ENCODE measurements at regions of chr9 and their contacts with region 1.

Region 1: GRCh38 chr9:70111042-70111602 is 67.5 kb downstream of the MAMDC2 start:
- DNase-seq: peak; percentile 66
- H3K4me3 Mint-ChIP-seq: no peak overlapping the region
- H3K27ac Mint-ChIP-seq: no peak overlapping the region
- H3K4me1 Mint-ChIP-seq: no peaks in the 10 kb centered on the region
- H3K27me3 Mint-ChIP-seq: peaks cover 29% of the 10 kb centered on the region

Region 2: DNA sequence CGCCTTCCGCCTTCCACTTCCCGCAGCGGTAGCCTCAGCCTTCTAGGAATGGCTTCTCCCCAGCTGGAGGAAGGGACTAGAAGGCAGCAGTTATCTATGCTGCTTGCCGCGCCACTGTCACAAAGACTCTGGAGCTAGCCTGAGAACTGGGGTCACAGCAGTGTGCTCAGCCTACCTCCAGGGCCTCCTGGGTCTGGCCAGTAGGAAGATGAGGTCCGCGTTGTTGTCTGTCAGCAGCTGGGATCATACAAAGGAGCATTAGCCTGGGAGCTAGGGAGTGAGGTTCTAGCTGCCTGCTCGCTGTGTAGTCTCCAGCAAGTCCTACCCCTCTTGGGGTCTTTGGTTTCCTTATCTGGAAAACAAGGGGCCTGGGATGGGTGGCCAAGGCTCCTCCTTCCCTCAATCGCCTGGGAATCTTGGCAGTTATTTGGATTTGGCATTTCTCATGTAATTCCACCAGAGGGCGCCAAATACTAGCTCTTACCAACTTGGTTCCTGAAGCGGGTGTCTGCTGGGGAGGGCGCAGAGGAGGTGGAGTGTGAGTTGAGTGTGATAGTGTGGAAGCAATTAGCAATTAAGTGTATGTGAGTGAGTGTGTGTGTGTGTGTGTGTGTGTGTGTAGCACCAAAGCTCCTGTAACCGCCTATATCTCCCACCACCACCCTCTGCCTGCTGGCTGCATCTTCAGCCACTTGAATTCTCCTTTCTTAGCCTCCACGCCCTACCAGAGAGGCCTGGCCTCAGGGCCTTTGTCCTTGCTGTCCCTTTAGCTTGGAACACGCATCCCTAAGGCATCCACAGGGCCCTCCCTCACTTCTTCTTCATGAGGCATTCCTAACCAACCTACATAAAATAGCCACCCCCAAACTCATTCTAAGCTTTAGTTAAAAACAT is 689.0 kb before region 1 on chr9:
- CTCF ChIA-PET with region 1: interaction called, 24 read pairs
- DNase-seq: peak; percentile 56
- H3K4me3 Mint-ChIP-seq: no peak overlapping the region
- H3K27ac Mint-ChIP-seq: no peak overlapping the region
- H3K4me1 Mint-ChIP-seq: no peaks in the 10 kb centered on the region
- H3K27me3 Mint-ChIP-seq: peaks cover 15% of the 10 kb centered on the region

Region 3: GRCh38 chr9:69971643-69972449 is 139.3 kb before region 1 on chr9:
- CTCF ChIA-PET with region 1: interaction called, 71 read pairs
- DNase-seq: peak; percentile 70
- H3K4me3 Mint-ChIP-seq: no peak overlapping the region
- H3K27ac Mint-ChIP-seq: no peak overlapping the region
- H3K4me1 Mint-ChIP-seq: no peaks in the 10 kb centered on the region
- H3K27me3 Mint-ChIP-seq: peaks cover 15% of the 10 kb centered on the region

Region 4: DNA sequence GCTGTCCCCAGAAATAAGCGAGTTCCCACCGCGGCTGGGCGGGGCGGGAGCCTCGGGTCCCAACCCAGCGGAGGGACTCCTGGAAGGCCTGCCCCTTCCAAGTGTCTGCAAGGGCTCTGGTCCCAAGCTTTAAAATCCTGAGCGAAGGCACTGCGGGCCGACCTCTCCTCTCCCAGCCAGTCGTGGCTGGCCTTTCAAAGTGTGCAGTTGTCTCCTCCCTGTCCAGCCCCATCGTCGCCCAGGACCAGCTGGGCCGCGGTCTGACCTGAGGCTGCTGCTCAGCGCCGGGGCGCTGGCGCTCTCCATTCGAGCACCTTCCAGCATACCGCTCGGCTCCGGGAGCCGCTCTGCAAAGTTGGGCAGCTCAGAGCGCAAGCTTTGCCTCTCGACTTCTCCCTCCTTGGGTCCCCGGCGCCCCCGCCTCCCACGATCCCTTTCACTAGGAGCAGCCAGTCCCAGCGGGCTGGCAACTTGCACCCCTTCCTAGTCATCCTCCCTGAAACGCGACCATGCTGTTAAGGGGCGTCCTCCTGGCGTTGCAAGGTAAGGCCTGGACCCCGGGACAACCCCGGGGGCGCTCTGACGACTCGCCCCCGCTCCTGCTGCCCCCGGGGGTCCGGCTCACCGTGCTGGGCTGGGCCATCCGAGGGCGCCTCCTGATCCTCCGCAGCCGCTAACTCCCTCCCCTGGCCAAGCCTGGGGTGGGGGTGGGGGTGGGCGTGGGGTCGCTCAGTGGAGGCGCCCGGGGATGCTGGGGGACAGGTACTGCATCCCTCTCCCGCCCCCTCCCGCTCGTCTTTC is 67.2 kb before region 1 on chr9 and contains the start of gene MAMDC2:
- CTCF ChIA-PET with region 1: no interaction called
- DNase-seq: no peak
- H3K4me3 Mint-ChIP-seq: no peak within 1 kb of the TSS
- H3K27ac Mint-ChIP-seq: no peak within 1 kb of the TSS
- H3K4me1 Mint-ChIP-seq: peaks cover 11% of the 10 kb centered on the region
- H3K27me3 Mint-ChIP-seq: peaks cover 71% of the 10 kb centered on the region

Region 5: GRCh38 chr9:70093944-70094343 is 17.2 kb before region 1 on chr9:
- CTCF ChIA-PET with region 1: interaction called, 33 read pairs
- DNase-seq: no peak
- H3K4me3 Mint-ChIP-seq: no peak overlapping the region
- H3K27ac Mint-ChIP-seq: no peak overlapping the region
- H3K4me1 Mint-ChIP-seq: no peaks in the 10 kb centered on the region
- H3K27me3 Mint-ChIP-seq: no peaks in the 10 kb centered on the region

Region 6: DNA sequence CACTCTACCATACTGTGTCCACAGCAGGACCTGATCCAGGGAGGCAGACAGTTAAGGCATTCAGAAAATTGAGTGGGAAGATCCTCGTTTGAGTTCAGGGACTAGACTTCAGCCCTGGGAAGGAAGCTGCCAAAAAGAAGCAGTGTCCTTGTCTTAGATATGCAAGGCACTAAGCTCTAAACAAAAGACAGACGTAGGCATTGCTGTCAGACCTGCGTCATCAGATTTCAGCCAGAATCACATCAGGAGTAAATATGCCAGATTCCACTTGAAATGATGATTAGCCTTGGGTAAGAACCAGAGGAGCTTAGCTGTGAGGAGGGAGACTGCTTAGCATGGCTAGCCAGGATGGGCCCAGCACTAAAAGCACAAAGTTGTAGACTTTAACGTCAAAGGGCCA is 10.8 kb before region 1 on chr9:
- CTCF ChIA-PET with region 1: interaction called, 33 read pairs
- DNase-seq: no peak
- H3K4me3 Mint-ChIP-seq: no peak overlapping the region
- H3K27ac Mint-ChIP-seq: no peak overlapping the region
- H3K4me1 Mint-ChIP-seq: no peaks in the 10 kb centered on the region
- H3K27me3 Mint-ChIP-seq: no peaks in the 10 kb centered on the region

Region 7: GRCh38 chr9:70133253-70134208 is 22.4 kb after region 1 on chr9:
- CTCF ChIA-PET with region 1: interaction called, 12 read pairs
- DNase-seq: no peak
- H3K4me3 Mint-ChIP-seq: no peak overlapping the region
- H3K27ac Mint-ChIP-seq: no peak overlapping the region
- H3K4me1 Mint-ChIP-seq: no peaks in the 10 kb centered on the region
- H3K27me3 Mint-ChIP-seq: peaks cover 4% of the 10 kb centered on the region

Region 8: GRCh38 chr9:70340572-70340971 is 229.4 kb after region 1 on chr9:
- CTCF ChIA-PET with region 1: no interaction called
- DNase-seq: no peak
- H3K4me3 Mint-ChIP-seq: no peak overlapping the region
- H3K27ac Mint-ChIP-seq: no peak overlapping the region
- H3K4me1 Mint-ChIP-seq: no peaks in the 10 kb centered on the region
- H3K27me3 Mint-ChIP-seq: no peaks in the 10 kb centered on the region

Region 9: DNA sequence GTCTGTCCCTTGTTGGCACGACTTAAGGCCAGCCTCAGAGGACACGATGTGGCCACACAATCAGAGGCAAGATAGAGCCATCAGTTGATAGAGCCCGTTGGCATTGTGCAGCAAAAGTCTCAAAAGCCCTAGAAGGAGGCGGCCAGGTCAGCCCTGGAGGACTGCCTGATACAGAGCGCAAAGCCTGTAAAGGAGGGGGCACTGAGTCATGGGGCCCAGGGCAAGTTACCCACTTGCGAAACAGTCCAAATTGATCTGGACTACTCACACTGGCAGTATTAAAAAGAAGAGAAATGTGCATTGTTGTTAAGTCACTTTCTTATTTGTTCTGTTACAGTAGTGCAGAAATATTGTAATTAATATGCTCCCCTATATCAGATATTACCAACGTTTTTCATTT is 251.8 kb after region 1 on chr9:
- CTCF ChIA-PET with region 1: no interaction called
- DNase-seq: no peak
- H3K4me3 Mint-ChIP-seq: no peak overlapping the region
- H3K27ac Mint-ChIP-seq: no peak overlapping the region
- H3K4me1 Mint-ChIP-seq: no peaks in the 10 kb centered on the region
- H3K27me3 Mint-ChIP-seq: no peaks in the 10 kb centered on the region